ENCODE measurements at regions of chr5 and their contacts with region 1.

Region 1: DNA sequence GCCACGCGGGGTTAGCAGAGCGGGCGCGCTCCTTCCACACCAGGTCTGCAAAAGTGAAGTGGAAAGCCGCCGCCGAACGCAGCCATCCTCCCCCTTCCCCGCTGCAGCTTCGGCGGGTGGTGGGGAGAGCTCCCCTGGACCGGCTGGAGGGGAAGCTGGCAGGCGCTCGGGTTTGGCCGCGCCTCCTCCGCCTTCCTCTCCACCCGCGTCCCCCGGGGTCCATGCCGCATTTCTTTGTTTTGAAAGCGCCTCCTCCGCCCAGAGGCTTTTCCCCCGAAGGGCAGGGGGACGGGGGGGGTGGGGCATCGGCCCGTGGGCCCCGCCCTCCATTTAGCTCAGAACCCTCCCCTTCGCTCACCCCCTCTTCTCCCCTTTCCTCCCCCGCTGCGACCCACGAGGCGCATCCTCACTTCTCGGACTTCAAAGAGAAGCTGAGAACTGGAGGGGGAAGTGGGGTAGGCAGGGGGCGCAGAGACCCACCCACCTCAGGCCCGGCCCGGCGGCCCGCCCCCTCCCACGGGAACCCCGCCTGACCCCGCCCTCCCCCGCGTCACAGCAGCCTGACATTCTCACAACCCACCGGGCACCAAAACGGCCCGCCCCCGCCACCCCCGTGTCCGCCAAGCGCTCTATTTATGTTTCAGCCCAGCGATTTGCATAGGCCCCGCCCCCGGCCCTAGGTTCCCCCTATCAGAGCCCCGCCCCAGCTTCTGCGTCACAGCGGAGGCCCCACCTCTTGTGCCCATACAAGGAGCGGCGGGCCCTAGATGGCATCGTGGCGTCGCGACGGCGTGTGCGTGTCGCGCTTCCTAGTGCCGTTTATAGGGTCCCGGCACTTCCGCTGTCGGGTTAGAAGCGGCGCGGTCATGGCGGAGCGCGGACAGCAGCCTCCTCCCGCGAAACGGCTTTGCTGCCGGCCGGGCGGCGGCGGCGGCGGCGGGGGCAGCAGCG is at the start of gene ZSWIM6:
- DNase-seq: peak; percentile 100
- H3K4me3 ChIP-seq: peak within 1 kb of the TSS; percentile 83 to 96 (median 94)
- H3K27ac ChIP-seq: peak within 1 kb of the TSS; percentile 94 to 99 (median 96)
- H3K4me1 ChIP-seq: peaks cover 24 to 57% (median 46%) of the 10 kb centered on the region in 4 donors
- H3K27me3 ChIP-seq: no peaks in the 10 kb centered on the region
- CTCF ChIP-seq: no peak
- EP300 ChIP-seq: peak; percentile 24
- POLR2A ChIP-seq: peak in 2 of 4 donors; percentile 72 to 91
- total RNA-seq, gene ZSWIM6: 14.5 to 39.3 (median 24.8) TPM

Region 2: DNA sequence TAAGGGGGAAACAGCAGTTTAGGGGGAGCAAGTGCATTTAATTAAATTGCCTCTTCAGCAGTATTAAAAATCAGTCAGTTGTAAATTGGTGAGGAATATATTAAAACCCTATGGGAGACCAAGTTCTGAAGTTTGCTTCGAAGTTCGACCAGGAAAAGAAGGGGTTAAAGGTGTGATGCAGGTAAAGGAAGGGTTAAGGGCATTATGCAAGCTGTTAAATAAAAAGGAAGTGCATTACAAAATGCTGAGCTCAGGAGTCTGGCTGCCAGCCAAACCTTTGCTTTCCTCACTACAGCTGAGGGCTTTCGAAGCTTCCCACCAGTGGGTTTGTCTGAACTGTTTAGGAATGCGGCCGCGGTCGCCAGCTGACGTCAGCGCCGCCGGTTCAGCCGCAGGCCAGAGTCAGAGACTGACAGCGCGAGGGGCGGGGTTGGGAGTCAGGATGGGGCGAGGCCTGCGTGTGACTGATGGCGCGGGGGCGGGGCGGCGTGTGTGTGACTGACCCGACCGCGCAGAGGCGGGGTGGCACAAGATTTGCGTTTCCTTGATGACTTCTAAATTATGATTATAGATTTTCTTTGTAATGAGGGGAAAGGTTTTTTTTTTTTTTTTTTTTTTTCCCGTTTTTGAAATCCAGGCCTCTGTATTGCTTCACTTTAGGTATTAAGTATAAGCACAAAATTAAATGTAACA is 76.9 kb after region 1 on chr5:
- intact Hi-C with region 1: loop called (anchors 5 kb)
- DNase-seq: peak; percentile 99 to 100
- H3K4me3 ChIP-seq: peak overlapping the region; percentile 4 to 19 (median 8)
- H3K27ac ChIP-seq: peak overlapping the region in 4 of 5 donors; percentile 69 to 81 (median 74)
- H3K4me1 ChIP-seq: peaks cover 6 to 43% (median 23%) of the 10 kb centered on the region in 4 donors
- H3K27me3 ChIP-seq: no peaks in the 10 kb centered on the region
- CTCF ChIP-seq: no peak
- EP300 ChIP-seq: peak; percentile 93
- POLR2A ChIP-seq: no peak